WTC11 (cell line): ENCODE measurements at regions of chr1 and their contacts with region 1.

Region 1: DNA sequence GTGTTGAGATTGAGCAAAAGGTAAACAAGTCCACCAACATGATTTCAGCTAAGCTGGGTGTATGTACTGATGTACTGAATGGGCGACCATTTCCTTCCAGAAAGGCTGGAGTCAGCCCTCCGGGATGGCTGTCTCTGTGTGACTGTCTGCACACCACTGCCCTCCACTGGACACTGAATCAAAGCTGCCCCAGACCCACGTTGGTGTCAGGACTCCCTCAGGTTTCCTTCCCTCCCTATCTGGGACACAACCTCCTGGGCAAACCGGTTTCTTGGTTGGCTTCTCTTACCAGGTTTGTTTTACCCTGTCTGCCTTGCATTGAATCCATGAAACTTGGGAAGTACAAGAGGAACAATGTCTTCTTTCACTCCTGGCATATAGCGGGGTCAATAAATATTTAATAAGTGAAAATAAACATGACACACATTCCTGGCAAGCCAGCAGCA is 5.3 kb upstream of the SRP9 start:
- DNase-seq: peak; percentile 88
- ATAC-seq: peak; percentile 86
- H3K4me3 Mint-ChIP-seq: no peak overlapping the region
- H3K27ac Mint-ChIP-seq: peak overlapping the region; percentile 77
- H3K4me1 Mint-ChIP-seq: peaks cover 53% of the 10 kb centered on the region
- H3K27me3 Mint-ChIP-seq: no peaks in the 10 kb centered on the region; the same call in 1 of the 2 replicates
- CTCF ChIP-seq: no peak

Region 2: GRCh38 chr1:225652729-225653462 is 119.5 kb before region 1 on chr1 and contains the start of gene ENAH:
- CTCF ChIA-PET with region 1: interaction called, 26 read pairs
- POLR2A ChIA-PET with region 1: interaction called, 9 read pairs
- DNase-seq: peak; percentile 77
- ATAC-seq: peak; percentile 81
- H3K4me3 Mint-ChIP-seq: peak within 1 kb of the TSS; percentile 93
- H3K27ac Mint-ChIP-seq: peak within 1 kb of the TSS; percentile 98
- H3K4me1 Mint-ChIP-seq: peaks cover 49% of the 10 kb centered on the region
- H3K27me3 Mint-ChIP-seq: no peaks in the 10 kb centered on the region
- CTCF ChIP-seq: no peak
- total RNA-seq, gene ENAH: 223 to 229 TPM (median 227 TPM) in 3 replicates

Region 3: GRCh38 chr1:225658041-225658440 is 114.3 kb before region 1 on chr1:
- CTCF ChIA-PET with region 1: interaction called, 26 read pairs
- POLR2A ChIA-PET with region 1: interaction called, 8 read pairs
- DNase-seq: no peak
- ATAC-seq: no peak
- H3K4me3 Mint-ChIP-seq: no peak overlapping the region
- H3K27ac Mint-ChIP-seq: no peak overlapping the region
- H3K4me1 Mint-ChIP-seq: peaks cover 18% of the 10 kb centered on the region
- H3K27me3 Mint-ChIP-seq: no peaks in the 10 kb centered on the region
- CTCF ChIP-seq: no peak

Region 4: GRCh38 chr1:225710804-225711203 is 61.5 kb before region 1 on chr1:
- CTCF ChIA-PET with region 1: interaction called, 13 read pairs
- POLR2A ChIA-PET with region 1: no interaction called
- DNase-seq: no peak
- ATAC-seq: peak; percentile 26
- H3K4me3 Mint-ChIP-seq: no peak overlapping the region
- H3K27ac Mint-ChIP-seq: no peak overlapping the region
- H3K4me1 Mint-ChIP-seq: peaks cover 9% of the 10 kb centered on the region
- H3K27me3 Mint-ChIP-seq: no peaks in the 10 kb centered on the region; the same call in 1 of the 2 replicates
- CTCF ChIP-seq: no peak

Region 5: GRCh38 chr1:225746361-225747179 is 25.8 kb before region 1 on chr1:
- CTCF ChIA-PET with region 1: interaction called, 31 read pairs
- POLR2A ChIA-PET with region 1: interaction called, 6 read pairs
- DNase-seq: peak; percentile 75
- ATAC-seq: peak; percentile 91
- H3K4me3 Mint-ChIP-seq: peak overlapping the region; percentile 20
- H3K27ac Mint-ChIP-seq: peak overlapping the region; percentile 65
- H3K4me1 Mint-ChIP-seq: peaks cover 29% of the 10 kb centered on the region
- H3K27me3 Mint-ChIP-seq: peaks cover 18% of the 10 kb centered on the region
- CTCF ChIP-seq: no peak

Region 6: DNA sequence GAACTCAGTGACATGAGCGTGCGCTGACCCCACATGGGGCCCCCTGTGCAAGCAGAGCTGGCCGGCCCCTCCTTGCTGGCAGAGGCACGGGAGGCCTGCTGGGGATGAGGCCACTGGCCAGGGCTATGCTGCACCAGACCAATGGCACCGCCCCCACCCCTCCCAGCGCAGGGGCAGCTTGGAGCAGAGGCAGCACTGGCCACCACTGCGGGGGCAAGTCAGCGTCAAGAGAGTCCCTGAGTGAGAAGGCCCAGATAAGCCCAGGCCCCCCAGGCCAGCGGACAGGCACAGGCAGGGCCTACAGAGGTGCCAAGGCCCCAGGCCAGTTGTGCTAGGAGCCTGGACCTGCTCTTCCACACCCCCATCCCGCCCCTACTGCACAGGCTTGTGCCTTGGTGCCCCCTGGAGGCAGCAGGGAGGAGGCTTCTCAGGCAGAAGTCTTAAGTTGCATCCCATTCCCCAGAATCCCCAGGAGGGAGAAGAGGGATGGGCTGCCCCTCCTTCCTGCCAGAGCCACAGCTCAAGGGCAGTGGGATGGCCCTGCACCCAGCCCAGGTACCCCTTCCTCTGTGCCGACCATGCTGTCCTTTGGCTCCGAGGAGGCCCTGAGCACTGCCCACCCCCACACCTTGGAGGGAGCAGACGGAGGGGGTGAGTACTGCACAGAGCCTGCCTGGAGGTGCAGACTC is 73.4 kb after region 1 on chr1:
- CTCF ChIA-PET with region 1: interaction called, 20 read pairs
- POLR2A ChIA-PET with region 1: interaction called, 5 read pairs
- DNase-seq: peak; percentile 90
- ATAC-seq: peak; percentile 82
- H3K4me3 Mint-ChIP-seq: no peak overlapping the region
- H3K27ac Mint-ChIP-seq: peak overlapping the region; percentile 87
- H3K4me1 Mint-ChIP-seq: peaks cover 12% of the 10 kb centered on the region
- H3K27me3 Mint-ChIP-seq: no peaks in the 10 kb centered on the region
- CTCF ChIP-seq: peak; percentile 61